ENCODE measurements at regions of chr5 and their contacts with region 1.

Region 1: DNA sequence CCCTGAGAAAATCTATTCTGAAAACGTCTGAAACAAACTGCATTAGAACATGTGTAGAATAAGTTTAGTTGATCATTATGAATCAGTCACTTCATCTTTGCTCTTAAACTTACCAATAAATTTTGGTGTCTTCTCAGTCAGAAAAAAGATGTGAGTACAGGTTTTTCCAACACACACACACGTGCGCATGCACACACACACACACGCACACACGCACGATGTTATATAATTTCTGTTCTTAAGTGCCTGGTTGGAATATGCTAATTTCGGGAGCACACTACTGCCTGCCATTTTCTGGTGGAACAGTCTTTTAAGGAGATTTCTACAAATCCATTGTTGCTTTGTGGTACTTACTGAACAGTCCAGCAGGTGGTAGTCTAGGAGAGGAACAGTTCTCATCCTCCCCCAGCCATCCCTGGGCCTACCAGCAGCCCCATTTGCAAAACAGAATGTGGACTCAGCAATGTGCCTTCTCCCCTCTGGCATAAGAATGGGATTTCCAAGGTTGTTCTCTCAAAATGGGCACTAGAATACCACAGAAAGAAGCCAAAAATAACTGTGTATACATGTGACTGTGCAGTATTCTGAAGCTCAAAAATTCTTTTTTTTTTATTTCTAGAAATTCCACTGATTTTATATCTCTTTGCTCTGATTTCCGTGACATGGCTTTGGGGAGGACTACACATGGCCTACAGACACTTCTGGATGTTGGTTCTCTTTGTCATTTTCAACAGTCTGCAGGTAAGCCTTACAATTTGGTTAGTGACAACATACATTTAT is 281.3 kb downstream of the ARRDC3 start:
- DNase-seq: peak; percentile 18 to 50 (median 36)
- ATAC-seq: peak; percentile 95
- H3K4me3 ChIP-seq: no peak overlapping the region
- H3K4me3 Mint-ChIP-seq: no peak overlapping the region
- H3K27ac ChIP-seq: no peak overlapping the region
- H3K27ac Mint-ChIP-seq: peak overlapping the region in 2 of 9 donors; percentile 4 to 18
- H3K4me1 ChIP-seq: no peaks in the 10 kb centered on the region
- H3K4me1 Mint-ChIP-seq: peaks cover 0 to 4% (median 0%) of the 10 kb centered on the region in 7 donors
- H3K27me3 ChIP-seq: no peaks in the 10 kb centered on the region
- H3K27me3 Mint-ChIP-seq: peaks cover 0 to 26% (median 0%) of the 10 kb centered on the region in 5 donors

Region 2: DNA sequence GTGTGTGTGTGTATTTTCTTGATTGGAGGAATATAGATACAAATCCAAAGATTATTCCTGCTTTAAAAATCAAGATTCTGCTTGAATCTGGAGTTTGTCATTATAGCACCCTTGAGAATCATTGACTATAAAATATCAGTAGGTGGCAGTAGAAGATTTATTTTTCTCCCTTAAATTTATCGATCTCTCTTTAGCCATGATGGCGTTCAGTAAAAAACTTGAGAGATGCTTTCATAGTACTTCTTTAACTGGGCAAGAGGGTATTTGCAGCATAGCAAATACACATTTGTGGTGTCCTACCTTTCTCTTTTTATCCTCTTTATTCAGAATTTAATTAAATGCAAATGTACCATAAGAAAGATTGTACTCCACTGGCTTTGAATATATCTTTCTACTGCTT is 235.5 kb before region 1 on chr5:
- CTCF ChIA-PET with region 1: interaction called, 3 read pairs
- POLR2A ChIA-PET with region 1: no interaction called
- intact Hi-C with region 1: loop called in 1 of 2 experiments (anchors 5 kb)
- DNase-seq: peak in 6 of 9 donors; percentile 11 to 49 (median 38)
- ATAC-seq: peak; percentile 60
- H3K4me3 ChIP-seq: no peak overlapping the region
- H3K4me3 Mint-ChIP-seq: no peak overlapping the region
- H3K27ac ChIP-seq: no peak overlapping the region
- H3K27ac Mint-ChIP-seq: no peak overlapping the region
- H3K4me1 ChIP-seq: peaks cover 0 to 6% of the 10 kb centered on the region in 2 donors
- H3K4me1 Mint-ChIP-seq: peaks cover 0 to 19% (median 9%) of the 10 kb centered on the region in 7 donors
- H3K27me3 ChIP-seq: no peaks in the 10 kb centered on the region
- H3K27me3 Mint-ChIP-seq: peaks cover 0 to 16% (median 4%) of the 10 kb centered on the region in 5 donors

Region 3: DNA sequence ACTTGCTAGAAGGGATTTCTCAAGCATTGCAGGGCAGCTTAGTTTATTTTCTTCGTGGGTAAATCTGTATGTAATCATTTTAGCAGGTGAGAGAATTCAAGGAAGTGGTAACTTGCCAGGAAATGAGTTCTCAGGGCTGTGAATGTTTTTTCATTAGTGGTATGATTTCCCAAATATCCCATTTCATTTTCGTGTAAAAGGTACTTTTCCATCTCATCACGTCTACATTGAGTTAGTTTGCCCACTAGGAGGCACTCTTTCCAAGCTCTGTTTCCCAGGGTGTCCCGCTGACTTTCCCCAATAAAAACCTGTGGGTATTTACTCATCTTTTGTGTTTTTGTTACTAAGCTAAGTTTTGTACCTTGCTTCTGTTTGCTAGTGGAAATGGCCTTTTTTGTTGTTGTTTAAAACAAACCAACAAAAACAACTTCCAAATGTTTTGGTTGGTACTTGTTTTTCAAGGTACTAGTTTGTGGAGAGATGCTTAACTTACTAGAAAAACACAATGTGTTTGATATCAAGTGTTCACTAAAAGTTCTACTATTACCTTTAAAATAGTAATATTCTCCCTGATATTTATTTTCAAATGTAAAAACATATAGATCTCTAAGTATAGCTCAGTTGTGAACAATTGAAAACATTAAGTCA is 169.6 kb before region 1 on chr5:
- CTCF ChIA-PET with region 1: interaction called, 3 read pairs
- POLR2A ChIA-PET with region 1: no interaction called
- intact Hi-C with region 1: loop called (anchors 5 to 10 kb)
- DNase-seq: peak in 6 of 9 donors; percentile 27 to 46 (median 31)
- ATAC-seq: no peak
- H3K4me3 ChIP-seq: no peak overlapping the region
- H3K4me3 Mint-ChIP-seq: no peak overlapping the region
- H3K27ac ChIP-seq: no peak overlapping the region
- H3K27ac Mint-ChIP-seq: no peak overlapping the region
- H3K4me1 ChIP-seq: no peaks in the 10 kb centered on the region
- H3K4me1 Mint-ChIP-seq: peaks cover 0 to 5% (median 0%) of the 10 kb centered on the region in 7 donors
- H3K27me3 ChIP-seq: peaks cover 0 to 3% of the 10 kb centered on the region in 2 donors
- H3K27me3 Mint-ChIP-seq: peaks cover 3 to 14% (median 8%) of the 10 kb centered on the region in 5 donors

Region 4: DNA sequence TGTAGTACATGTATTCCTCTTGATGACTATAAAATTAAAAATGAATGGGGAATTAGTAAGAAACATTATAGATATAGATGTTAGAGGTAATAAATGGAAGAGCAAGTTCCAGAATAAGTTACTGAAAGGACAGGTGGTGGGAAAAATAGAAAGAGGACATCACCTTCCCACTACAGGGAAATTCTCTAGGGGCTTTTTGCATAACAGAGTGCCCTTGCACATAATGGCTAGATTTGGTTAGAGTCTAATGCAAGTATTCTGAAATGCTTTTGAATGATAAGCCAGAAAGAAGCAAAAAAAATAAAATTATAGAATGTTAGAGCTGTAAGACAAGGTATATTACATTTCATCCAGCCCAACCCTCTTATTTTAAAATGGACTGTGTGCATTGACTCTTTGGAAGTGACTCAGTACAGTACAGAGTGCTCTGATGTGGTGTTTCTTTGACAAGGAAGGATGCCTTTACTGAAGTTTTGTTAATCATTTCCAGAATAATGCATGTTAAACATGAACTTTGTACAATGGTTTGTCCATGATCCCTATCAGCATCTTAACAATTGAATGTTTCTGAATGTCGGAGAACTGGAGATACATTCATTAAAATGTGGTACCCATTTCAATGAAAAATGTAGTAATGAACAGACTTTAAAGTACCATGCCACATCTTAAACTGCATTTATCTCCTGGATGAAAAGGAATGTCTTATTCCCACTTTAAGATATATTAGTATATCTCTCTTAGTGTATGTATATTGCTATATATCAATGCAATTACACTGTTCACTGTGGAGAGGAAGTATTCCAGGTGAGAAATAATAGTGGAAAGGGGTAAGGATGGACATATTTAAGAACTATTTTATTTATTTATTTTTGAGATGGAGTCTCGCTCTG is 152.1 kb before region 1 on chr5:
- CTCF ChIA-PET with region 1: no interaction called
- POLR2A ChIA-PET with region 1: no interaction called
- intact Hi-C with region 1: no loop called
- DNase-seq: no peak
- ATAC-seq: no peak
- H3K4me3 ChIP-seq: no peak overlapping the region
- H3K4me3 Mint-ChIP-seq: no peak overlapping the region
- H3K27ac ChIP-seq: no peak overlapping the region
- H3K27ac Mint-ChIP-seq: no peak overlapping the region
- H3K4me1 ChIP-seq: no peaks in the 10 kb centered on the region
- H3K4me1 Mint-ChIP-seq: no peaks in the 10 kb centered on the region
- H3K27me3 ChIP-seq: no peaks in the 10 kb centered on the region
- H3K27me3 Mint-ChIP-seq: peaks cover 18 to 35% (median 21%) of the 10 kb centered on the region in 5 donors

Region 5: DNA sequence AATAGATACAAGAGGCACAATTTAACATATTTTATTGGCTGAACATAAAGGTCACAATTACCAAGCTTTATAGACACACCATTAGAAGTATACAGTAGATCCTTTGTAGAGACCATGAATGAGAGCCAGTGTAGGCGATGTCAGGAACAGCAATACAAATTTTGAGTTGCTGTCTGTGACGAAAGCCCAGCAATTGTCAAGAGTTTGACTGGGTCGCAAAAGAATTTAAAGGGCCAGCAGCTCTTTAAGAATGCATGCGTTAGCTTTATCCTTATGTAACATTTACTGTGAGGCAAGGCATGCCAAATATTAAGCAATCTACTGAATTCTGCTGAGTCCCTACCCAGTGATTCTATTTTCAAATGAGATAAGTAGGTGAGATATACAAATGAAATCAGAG is 44.4 kb after region 1 on chr5:
- CTCF ChIA-PET with region 1: no interaction called
- POLR2A ChIA-PET with region 1: no interaction called
- intact Hi-C with region 1: no loop called
- DNase-seq: no peak
- ATAC-seq: peak; percentile 34
- H3K4me3 ChIP-seq: no peak overlapping the region
- H3K4me3 Mint-ChIP-seq: no peak overlapping the region
- H3K27ac ChIP-seq: no peak overlapping the region
- H3K27ac Mint-ChIP-seq: no peak overlapping the region
- H3K4me1 ChIP-seq: no peaks in the 10 kb centered on the region
- H3K4me1 Mint-ChIP-seq: peaks cover 0 to 7% (median 0%) of the 10 kb centered on the region in 7 donors
- H3K27me3 ChIP-seq: no peaks in the 10 kb centered on the region
- H3K27me3 Mint-ChIP-seq: peaks cover 0 to 7% (median 0%) of the 10 kb centered on the region in 5 donors

Region 6: GRCh38 chr5:91162534-91163381 is 61.0 kb after region 1 on chr5:
- CTCF ChIA-PET with region 1: no interaction called
- POLR2A ChIA-PET with region 1: no interaction called
- intact Hi-C with region 1: loop called in 1 of 2 experiments (anchors 5 kb)
- DNase-seq: peak in 2 of 9 donors; percentile 8 to 64
- ATAC-seq: peak; percentile 93
- H3K4me3 ChIP-seq: no peak overlapping the region
- H3K4me3 Mint-ChIP-seq: peak overlapping the region in 3 of 10 donors; percentile 0 to 46 (median 1)
- H3K27ac ChIP-seq: no peak overlapping the region
- H3K27ac Mint-ChIP-seq: peak overlapping the region in 4 of 9 donors; percentile 10 to 71 (median 35)
- H3K4me1 ChIP-seq: no peaks in the 10 kb centered on the region
- H3K4me1 Mint-ChIP-seq: peaks cover 5 to 24% (median 13%) of the 10 kb centered on the region in 7 donors
- H3K27me3 ChIP-seq: no peaks in the 10 kb centered on the region
- H3K27me3 Mint-ChIP-seq: no peaks in the 10 kb centered on the region

Region 7: DNA sequence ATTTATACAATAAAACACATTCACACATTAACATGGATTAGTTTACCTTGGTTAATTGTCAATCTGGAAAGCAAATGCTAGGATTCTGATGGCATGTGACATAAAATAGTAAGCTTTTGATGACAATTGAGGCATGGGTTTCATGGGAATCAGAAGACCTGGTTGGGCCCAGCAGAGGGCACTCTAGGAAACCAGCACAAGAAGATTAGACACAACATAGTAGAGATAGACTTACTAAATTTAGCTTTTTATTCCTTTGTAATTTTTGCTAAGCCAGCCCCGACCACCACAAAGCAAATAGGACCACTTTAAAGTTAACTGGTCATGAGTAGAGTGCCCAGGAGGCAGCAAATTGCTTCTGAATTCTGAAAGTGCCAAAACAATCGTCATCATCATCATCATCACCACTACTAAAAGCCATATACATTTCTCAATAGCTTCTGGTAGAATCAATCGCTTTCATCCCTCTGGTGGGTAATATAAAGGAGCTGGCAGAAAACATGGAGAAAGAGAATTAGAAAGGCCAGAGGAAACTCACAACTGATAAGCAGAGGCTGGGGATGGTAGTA is 118.1 kb after region 1 on chr5:
- CTCF ChIA-PET with region 1: no interaction called
- POLR2A ChIA-PET with region 1: no interaction called
- intact Hi-C with region 1: loop called (anchors 2 kb)
- DNase-seq: peak in 5 of 9 donors; percentile 13 to 31 (median 17)
- ATAC-seq: peak; percentile 54
- H3K4me3 ChIP-seq: no peak overlapping the region
- H3K4me3 Mint-ChIP-seq: no peak overlapping the region
- H3K27ac ChIP-seq: no peak overlapping the region
- H3K27ac Mint-ChIP-seq: peak overlapping the region in 1 of 9 donors; percentile 41
- H3K4me1 ChIP-seq: no peaks in the 10 kb centered on the region
- H3K4me1 Mint-ChIP-seq: peaks cover 0 to 3% (median 0%) of the 10 kb centered on the region in 7 donors
- H3K27me3 ChIP-seq: no peaks in the 10 kb centered on the region
- H3K27me3 Mint-ChIP-seq: peaks cover 0 to 5% (median 0%) of the 10 kb centered on the region in 5 donors

Region 8: DNA sequence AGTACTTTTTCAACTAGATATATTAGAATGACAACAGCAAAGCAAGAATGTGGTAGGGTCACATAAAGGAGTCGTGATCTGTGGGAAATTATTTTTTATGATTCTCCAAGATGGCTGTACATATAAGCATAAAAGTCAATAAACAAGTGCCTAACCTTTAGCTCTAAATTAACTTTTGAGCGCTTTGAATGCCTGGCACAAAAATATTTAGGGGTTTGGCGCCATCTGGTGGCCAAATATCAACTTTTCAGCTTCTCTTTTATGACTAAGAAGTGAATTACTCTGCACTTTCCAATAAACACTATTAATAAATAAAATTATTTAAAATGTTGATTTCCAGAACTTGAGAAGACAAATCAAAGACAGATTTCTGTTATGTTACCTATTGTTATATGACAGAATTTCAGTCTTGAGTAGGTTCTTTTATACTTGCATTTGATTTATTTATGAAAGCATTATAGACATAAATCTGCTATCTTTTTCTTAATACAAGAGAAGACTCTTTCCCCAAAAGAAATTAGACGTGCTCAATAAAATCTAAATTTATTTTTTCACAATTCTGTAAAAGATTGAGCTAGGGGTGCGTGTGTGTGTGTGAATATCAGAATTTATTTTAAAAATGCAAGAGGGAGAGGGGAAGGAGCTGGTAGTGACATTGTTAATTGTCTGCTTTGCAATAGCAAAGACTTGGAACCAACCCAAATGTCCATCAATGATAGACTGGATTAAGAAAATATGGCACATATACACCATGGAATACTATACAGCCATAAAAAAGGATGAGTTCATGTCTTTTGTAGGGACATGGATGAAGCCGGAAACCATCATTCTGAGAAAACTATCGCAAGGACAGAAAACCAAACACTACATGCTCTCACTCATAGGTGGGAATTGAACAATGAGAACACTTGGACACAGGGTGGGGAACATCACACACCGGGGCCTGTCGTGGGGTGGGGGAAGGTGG is 318.1 kb after region 1 on chr5:
- CTCF ChIA-PET with region 1: interaction called, 3 read pairs
- POLR2A ChIA-PET with region 1: no interaction called
- intact Hi-C with region 1: loop called (anchors 1 kb)
- DNase-seq: peak; percentile 40 to 72 (median 58)
- ATAC-seq: peak; percentile 60
- H3K4me3 ChIP-seq: no peak overlapping the region
- H3K4me3 Mint-ChIP-seq: peak overlapping the region in 1 of 10 donors; percentile 15
- H3K27ac ChIP-seq: no peak overlapping the region
- H3K27ac Mint-ChIP-seq: no peak overlapping the region
- H3K4me1 ChIP-seq: no peaks in the 10 kb centered on the region
- H3K4me1 Mint-ChIP-seq: peaks cover 0 to 30% (median 20%) of the 10 kb centered on the region in 7 donors
- H3K27me3 ChIP-seq: no peaks in the 10 kb centered on the region
- H3K27me3 Mint-ChIP-seq: peaks cover 0 to 5% (median 0%) of the 10 kb centered on the region in 5 donors